Heart left ventricle (tissue), 16 donors: ENCODE measurements at regions of chr1 and their contacts with region 1.

Region 1: GRCh38 chr1:119675349-119676345 is 27.6 kb upstream of the ZNF697 start:
- DNase-seq: peak in 4 of 5 donors; percentile 74 to 83 (median 80)
- ATAC-seq: peak; percentile 61 to 87 (median 80)
- H3K4me3 ChIP-seq: peak overlapping the region in 11 of 12 donors; percentile 7 to 62 (median 45)
- H3K27ac ChIP-seq: peak overlapping the region in 5 of 12 donors; percentile 6 to 70 (median 47)
- H3K4me1 ChIP-seq: peaks cover 0 to 21% (median 8%) of the 10 kb centered on the region in 12 donors
- H3K27me3 ChIP-seq: no peaks in the 10 kb centered on the region
- CTCF ChIP-seq: peak; percentile 74 to 93 (median 86)
- POLR2A ChIP-seq: no peak

Region 2: DNA sequence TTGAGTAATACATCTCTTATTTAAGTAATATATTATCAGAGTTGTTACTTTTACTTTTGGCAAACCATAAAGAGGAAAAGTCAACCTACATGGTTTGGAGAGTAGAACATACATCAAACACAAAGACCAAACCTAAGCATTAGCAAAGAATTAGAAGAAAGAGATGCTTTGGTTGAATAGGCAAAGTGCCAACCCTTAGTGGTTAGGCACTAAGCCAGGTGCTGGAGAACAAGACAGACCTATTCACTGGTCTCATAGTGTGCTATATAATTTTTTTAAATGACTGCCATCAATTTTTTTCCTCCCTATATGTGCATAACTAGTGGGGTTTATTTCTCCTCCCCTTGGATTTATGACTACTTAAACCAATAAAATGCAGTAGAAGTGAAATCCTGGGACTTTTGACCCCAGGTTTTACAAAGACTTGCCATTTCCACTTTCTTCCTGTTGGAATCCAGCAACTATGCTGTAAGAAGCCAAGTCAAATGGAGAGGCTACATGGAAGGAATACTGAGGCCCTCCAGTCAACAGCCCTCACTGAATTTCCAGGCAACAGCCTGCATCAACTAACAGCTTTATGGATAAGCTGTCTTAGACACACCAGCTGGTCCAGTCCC is 376.9 kb before region 1 on chr1:
- intact Hi-C with region 1: no loop called
- DNase-seq: no peak
- ATAC-seq: no peak
- H3K4me3 ChIP-seq: no peak overlapping the region
- H3K27ac ChIP-seq: no peak overlapping the region
- H3K4me1 ChIP-seq: no peaks in the 10 kb centered on the region
- H3K27me3 ChIP-seq: no peaks in the 10 kb centered on the region
- CTCF ChIP-seq: no peak
- POLR2A ChIP-seq: no peak

Region 3: DNA sequence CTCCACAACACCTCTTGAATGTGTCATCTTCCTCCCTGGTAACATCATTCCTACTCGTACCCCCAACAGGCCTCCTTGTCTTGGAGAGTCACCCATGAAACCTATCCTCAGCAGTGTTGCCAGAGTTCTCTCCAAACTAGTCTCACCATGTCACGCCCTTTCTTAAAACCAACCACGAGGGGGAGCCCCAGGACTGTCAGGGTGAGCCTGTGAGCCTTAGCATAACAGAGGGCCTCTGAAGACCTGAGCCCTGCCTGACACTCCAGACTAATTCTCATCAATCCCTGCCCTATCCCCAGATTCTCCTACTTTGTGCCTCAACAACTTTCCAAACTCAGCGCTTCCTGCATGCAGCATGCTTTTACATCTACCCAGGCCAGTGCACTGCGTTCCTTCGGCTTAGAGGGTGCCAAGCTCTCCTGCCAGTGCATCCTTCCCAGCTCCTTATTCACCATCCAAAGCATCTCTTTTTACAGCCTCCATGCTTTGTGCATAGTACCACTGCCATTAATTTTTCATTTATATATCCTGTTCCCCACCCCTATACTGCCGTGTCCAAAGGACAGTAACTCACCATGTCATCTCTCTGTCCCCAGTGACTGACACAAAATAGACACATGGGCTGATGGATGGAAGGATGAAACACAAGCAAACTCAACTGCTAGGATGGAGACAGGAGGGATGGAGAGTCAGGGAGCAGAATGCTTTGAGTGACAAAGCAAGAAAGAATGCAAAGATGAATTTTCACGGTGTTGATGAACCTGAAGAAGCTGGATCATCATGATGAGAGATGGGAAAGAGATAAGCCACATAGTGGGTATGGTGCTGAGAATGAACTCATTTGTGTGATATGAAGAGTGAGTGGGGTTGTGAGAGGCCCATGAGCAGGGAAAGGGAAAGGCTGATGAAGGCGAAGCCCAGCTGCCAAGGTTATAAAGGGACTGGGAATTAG is 61.6 kb before region 1 on chr1:
- intact Hi-C with region 1: loop called in 4 of 10 experiments (anchors 1 to 2 kb)
- DNase-seq: peak; percentile 82 to 88 (median 86)
- ATAC-seq: peak; percentile 84 to 94 (median 90)
- H3K4me3 ChIP-seq: no peak overlapping the region
- H3K27ac ChIP-seq: no peak overlapping the region
- H3K4me1 ChIP-seq: peaks cover 0 to 36% (median 14%) of the 10 kb centered on the region in 12 donors
- H3K27me3 ChIP-seq: no peaks in the 10 kb centered on the region
- CTCF ChIP-seq: peak; percentile 66 to 92 (median 88)
- POLR2A ChIP-seq: no peak

Region 4: DNA sequence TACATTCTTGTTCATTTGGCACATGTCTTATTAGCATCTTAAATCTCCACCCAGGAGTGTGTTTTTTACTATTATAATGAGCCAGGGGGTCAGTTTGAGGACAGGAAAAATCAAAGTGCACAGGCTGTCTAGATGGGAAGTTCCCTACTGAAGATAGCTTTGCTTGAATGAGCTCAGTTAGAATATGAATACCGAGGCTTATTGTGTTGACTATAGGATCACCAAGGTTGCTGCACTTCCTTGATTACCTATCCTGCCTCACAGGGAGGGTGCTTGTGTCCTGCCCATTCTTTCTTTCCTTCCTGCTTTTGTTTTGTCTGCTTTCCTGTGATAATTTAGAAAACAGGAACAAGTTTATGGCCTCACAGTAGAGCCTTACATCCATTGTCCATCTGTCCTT is 52.3 kb after region 1 on chr1:
- intact Hi-C with region 1: no loop called
- DNase-seq: no peak
- ATAC-seq: no peak
- H3K4me3 ChIP-seq: no peak overlapping the region
- H3K27ac ChIP-seq: no peak overlapping the region
- H3K4me1 ChIP-seq: peaks cover 0 to 9% (median 0%) of the 10 kb centered on the region in 12 donors
- H3K27me3 ChIP-seq: no peaks in the 10 kb centered on the region
- CTCF ChIP-seq: no peak
- POLR2A ChIP-seq: no peak

Region 5: DNA sequence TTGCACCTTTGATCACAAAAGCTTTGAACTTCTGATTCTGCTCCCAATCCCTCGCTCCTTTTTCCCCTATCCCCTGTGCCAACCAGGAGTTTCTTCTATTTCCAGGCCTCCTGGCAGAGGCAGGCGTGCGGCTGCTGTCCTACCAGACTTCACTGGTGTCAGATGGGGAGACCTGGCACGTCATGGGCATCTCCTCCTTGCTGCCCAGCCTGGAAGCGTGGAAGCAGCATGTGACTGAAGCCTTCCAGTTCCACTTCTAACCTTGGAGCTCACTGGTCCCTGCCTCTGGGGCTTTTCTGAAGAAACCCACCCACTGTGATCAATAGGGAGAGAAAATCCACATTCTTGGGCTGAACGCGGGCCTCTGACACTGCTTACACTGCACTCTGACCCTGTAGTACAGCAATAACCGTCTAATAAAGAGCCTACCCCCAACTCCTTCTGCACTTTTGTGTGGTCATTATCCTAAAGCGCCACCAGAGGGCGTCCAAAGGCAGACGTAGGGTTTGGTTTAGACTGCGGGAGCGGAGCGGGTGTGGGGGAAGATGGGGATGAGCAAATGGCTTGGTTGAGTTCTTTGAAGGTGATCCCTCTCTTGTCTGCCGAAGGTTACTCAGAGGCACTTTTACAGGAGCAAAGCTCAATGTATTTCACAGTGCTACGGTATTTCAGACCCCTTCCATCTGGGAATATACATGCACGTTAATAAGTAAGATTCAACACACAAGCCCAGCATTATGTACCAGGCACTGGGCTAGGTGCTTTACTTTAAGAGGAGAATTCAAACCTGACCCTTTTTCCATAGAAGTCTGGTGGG is 68.3 kb after region 1 on chr1:
- intact Hi-C with region 1: no loop called
- DNase-seq: peak in 4 of 5 donors; percentile 41 to 67 (median 62)
- ATAC-seq: peak; percentile 30 to 66 (median 56)
- H3K4me3 ChIP-seq: no peak overlapping the region
- H3K27ac ChIP-seq: peak overlapping the region in 3 of 12 donors; percentile 24 to 62 (median 34)
- H3K4me1 ChIP-seq: peaks cover 0 to 26% (median 11%) of the 10 kb centered on the region in 12 donors
- H3K27me3 ChIP-seq: no peaks in the 10 kb centered on the region
- CTCF ChIP-seq: peak; percentile 69 to 86 (median 80)
- POLR2A ChIP-seq: no peak